A673 (cell line): ENCODE measurements at regions of chr7 and their contacts with region 1.

Region 1: DNA sequence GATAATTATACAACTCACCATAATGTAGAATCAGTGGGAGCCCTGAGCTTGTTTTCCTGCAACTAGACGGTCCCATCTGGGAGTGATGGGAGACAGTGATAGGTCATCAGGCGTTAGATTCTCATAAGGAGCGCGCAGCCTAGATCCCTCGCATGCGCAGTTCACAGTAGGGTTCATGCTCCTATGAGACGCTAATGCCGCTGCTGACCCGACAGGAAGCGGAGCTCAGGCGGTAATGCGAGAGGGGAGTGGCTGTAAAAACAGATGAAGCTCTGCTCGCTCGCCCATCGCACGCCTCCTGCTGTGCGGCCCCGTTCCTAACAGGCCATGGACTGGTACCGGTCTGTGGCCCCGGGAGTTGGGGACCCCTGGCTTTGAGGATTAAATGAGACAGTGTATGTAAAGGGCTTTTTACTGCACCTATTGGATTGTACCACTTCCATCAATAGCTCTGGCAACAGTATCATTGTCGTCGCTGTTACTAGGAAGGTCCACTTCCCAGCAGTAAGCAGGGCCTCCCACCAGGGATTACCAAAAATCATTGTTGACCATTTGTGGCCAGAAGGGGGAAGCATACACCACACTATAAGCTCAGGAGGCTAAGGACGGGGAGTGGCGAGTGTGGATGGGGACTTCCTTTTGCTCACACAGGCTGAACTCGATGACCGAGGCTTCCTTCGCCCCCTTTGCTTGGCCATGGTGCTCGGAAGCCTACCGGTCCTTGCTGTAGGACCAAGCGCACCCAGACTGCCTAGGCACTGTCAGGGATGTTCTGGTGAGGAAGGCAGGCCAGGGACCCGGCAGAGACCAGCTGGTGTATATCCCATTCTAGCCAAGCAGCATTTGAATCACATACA is 26.4 kb downstream of the AKR1B1 start:
- DNase-seq: peak; percentile 88
- H3K4me3 ChIP-seq: peak overlapping the region; percentile 37
- H3K27ac ChIP-seq: no peak overlapping the region
- H3K4me1 ChIP-seq: peaks cover 3% of the 10 kb centered on the region
- H3K27me3 ChIP-seq: no peaks in the 10 kb centered on the region
- CTCF ChIP-seq: peak; percentile 74

Region 2: GRCh38 chr7:134514663-134515062 is 82.1 kb after region 1 on chr7:
- CTCF ChIA-PET with region 1: interaction called, 8 read pairs
- POLR2A ChIA-PET with region 1: no interaction called
- intact Hi-C with region 1: loop called (anchors 1 kb)
- DNase-seq: peak; percentile 84
- H3K4me3 ChIP-seq: no peak overlapping the region
- H3K27ac ChIP-seq: no peak overlapping the region
- H3K4me1 ChIP-seq: no peaks in the 10 kb centered on the region
- H3K27me3 ChIP-seq: no peaks in the 10 kb centered on the region
- CTCF ChIP-seq: peak; percentile 79

Region 3: DNA sequence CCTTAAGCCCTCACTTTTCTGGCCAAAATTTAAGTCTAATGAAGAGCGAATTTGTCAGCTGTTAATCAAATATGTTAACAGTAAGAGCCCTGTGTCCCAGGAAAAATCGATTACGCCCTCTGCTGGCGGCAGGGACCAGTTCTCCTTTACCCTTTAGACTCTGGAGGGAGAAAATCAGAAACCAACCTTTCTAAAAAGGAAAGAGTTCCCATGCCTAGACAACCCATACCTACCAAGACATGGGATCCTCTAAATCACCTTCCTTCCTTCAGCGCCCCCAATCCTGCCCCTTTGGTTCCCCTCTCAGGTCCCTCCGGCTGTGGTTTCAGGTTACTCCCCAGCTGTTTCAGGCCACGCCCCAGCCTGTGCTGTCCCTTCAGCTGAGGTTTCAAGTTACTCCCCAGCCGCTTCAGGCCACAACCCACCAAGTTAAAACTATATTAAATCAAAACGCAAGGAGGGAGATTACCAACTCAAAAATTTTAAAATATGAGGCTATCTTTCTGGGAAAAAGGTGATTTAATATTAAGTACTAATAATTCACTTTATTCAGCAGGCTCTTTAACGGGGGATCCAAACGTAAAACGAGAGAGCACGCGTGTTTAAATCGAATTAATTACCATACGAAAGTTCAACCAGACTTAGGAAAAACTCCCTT is 115.0 kb after region 1 on chr7:
- CTCF ChIA-PET with region 1: interaction called, 12 read pairs
- POLR2A ChIA-PET with region 1: no interaction called
- intact Hi-C with region 1: loop called (anchors 10 kb)
- DNase-seq: peak; percentile 81
- H3K4me3 ChIP-seq: peak overlapping the region; percentile 31
- H3K27ac ChIP-seq: no peak overlapping the region
- H3K4me1 ChIP-seq: peaks cover 14% of the 10 kb centered on the region
- H3K27me3 ChIP-seq: peaks cover 8% of the 10 kb centered on the region
- CTCF ChIP-seq: peak; percentile 99

Region 4: GRCh38 chr7:134605973-134606923 is 173.7 kb after region 1 on chr7:
- CTCF ChIA-PET with region 1: interaction called, 8 read pairs
- POLR2A ChIA-PET with region 1: no interaction called
- intact Hi-C with region 1: loop called (anchors 1 kb)
- DNase-seq: peak; percentile 78
- H3K4me3 ChIP-seq: no peak overlapping the region
- H3K27ac ChIP-seq: no peak overlapping the region
- H3K4me1 ChIP-seq: peaks cover 13% of the 10 kb centered on the region
- H3K27me3 ChIP-seq: peaks cover 16% of the 10 kb centered on the region
- CTCF ChIP-seq: peak; percentile 95

Region 5: GRCh38 chr7:134954197-134955082 is 521.9 kb after region 1 on chr7:
- CTCF ChIA-PET with region 1: no interaction called
- POLR2A ChIA-PET with region 1: no interaction called
- intact Hi-C with region 1: loop called (anchors 10 kb)
- DNase-seq: peak; percentile 59
- H3K4me3 ChIP-seq: no peak overlapping the region
- H3K27ac ChIP-seq: no peak overlapping the region
- H3K4me1 ChIP-seq: no peaks in the 10 kb centered on the region
- H3K27me3 ChIP-seq: no peaks in the 10 kb centered on the region
- CTCF ChIP-seq: peak; percentile 75